SK-MEL-5 (cell line): ENCODE measurements at regions of chr3 and their contacts with region 1.

Region 1: GRCh38 chr3:134485718-134486576 is at the starts of genes ANAPC13 and CEP63:
- DNase-seq: peak; percentile 96
- total RNA-seq, gene ANAPC13: 46.4 and 49.2 TPM in 2 replicates
- total RNA-seq, gene CEP63: 32.2 and 34.1 TPM in 2 replicates

Region 2: DNA sequence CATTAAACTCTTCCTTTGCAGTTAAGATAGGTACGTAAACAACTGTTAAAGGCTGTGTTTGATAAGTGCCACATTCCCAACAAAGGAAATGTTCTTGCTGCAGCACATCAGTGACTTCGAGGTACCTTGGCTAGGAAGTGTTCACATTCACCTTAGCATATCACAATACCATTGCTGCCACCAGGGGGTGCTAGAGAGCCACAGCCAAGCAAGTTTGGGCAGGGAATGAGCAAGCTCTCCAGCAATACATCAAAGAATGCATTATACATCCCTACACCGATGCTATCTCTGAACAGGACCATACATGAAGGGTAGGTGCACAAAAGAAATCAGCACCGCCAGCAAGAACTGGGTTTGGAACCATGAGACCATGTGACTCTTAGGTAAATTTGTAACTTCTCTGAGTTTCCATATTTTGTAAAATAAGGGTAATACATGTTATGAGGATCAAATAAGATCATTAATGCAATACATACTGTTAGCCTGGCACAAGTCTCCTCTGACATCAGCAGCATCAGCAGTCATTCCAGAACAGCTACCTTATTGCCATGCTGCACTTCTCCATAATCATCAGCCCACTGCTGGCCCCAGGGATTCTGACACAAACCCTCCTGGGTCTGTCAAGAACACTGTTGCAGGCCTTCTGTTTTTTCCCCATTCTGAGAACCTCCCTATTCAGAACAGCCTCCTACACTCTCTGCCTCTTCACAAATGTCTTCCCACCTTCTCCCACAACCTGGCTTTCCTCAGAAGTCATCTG is 272.9 kb before region 1 on chr3:
- in situ Hi-C with region 1: loop called (anchors 25 kb)
- DNase-seq: peak; percentile 88

Region 3: GRCh38 chr3:134663721-134664456 is 177.9 kb after region 1 on chr3:
- in situ Hi-C with region 1: no loop called
- DNase-seq: no peak